Activated T-helper 1 cell treated with anti-CD3 and anti-CD28 coated beads, Interleukin-12 subunit alpha, Interleukin-12 subunit beta, Interleukin-2, Interleukin-4 antibody, amounts not matched to agents 30 ng/mL and 10 ng/mL and 1 ng/mL, durations not matched to agents 14 hours and 24 hours and 36 hours (primary cell): ENCODE measurements at regions of chr11 and their contacts with region 1.

Region 1: DNA sequence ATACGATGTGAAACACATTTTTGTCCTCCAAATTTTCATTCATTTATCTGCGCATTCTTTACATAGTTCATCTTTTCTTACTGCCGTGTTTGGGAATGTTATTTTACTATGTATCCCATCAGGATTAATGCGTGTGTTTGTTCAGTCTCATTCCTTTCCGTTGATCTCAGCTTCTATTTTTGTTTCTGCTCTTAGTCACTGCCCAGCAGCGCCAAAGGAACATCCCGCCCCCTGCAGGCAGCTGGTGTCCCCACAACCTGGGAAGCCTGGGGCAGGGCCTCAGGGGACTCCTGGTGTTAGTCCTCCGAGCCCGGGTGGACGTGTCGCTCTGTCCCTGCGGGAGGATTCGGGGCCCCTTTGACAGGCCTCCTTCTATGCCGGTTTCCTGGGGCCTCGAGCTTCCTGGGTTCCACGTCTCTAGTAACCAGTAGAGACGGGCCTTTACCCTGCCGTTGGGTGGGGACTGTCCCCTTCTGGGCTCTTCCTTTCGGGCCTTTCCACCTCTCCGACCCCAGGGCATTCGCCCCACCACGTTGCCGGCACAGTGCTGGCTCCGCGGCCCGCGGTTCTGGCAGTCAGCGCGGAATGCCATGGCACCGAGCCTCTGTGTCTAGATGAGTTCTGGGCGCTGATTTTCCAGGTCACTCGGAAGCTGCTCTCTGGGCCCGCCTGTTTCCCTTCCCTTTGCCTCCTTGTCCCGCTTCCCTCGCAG is 39.8 kb downstream of the WEE1 start:
- DNase-seq: peak; percentile 80
- H3K4me3 Mint-ChIP-seq: peak overlapping the region; percentile 89
- H3K27ac Mint-ChIP-seq: peak overlapping the region; percentile 99
- H3K4me1 Mint-ChIP-seq: peaks cover 44% of the 10 kb centered on the region
- H3K27me3 Mint-ChIP-seq: peaks cover 1% of the 10 kb centered on the region

Region 2: DNA sequence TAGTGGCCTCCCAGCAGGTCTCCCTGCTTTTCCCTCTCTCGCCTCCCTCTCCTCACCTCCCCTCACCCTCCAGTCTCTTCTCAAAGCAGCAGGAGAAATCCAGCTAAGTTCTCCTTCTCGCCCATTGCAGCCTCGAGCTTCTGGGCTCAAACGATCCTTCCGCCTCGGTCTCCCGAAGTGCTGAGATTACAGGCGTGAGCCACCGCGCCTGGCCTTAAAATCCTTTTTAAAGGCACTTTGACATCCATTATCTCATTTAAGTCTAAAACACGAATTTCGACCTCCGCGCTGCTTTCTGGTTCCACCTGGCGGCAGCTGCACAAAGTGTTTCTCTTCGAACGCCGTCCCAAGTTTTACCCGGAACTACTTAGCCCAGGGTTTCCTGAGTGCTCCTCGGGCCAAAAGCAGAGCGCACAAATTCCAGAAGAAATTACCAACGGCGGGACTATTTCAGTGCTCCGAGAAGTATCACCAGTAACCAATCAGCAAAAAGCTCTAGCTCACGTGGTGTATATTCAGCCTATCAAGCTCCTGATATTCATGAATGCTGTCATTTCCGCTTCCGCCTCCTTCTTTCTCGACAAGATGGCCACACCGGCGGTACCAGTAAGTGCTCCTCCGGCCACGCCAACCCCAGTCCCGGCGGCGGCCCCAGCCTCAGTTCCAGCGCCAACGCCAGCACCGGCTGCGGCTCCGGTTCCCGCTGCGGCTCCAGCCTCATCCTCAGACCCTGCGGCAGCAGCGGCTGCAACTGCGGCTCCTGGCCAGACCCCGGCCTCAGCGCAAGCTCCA is 1626.3 kb before region 1 on chr11 and contains the start of gene EIF3F:
- intact Hi-C with region 1: loop called (anchors 10 kb)
- DNase-seq: peak; percentile 91
- H3K4me3 Mint-ChIP-seq: peak within 1 kb of the TSS; percentile 99
- H3K27ac Mint-ChIP-seq: peak within 1 kb of the TSS; percentile 93
- H3K4me1 Mint-ChIP-seq: peaks cover 39% of the 10 kb centered on the region
- H3K27me3 Mint-ChIP-seq: peaks cover 2% of the 10 kb centered on the region
- total RNA-seq, gene EIF3F: 210 and 214 TPM in 2 replicates

Region 3: DNA sequence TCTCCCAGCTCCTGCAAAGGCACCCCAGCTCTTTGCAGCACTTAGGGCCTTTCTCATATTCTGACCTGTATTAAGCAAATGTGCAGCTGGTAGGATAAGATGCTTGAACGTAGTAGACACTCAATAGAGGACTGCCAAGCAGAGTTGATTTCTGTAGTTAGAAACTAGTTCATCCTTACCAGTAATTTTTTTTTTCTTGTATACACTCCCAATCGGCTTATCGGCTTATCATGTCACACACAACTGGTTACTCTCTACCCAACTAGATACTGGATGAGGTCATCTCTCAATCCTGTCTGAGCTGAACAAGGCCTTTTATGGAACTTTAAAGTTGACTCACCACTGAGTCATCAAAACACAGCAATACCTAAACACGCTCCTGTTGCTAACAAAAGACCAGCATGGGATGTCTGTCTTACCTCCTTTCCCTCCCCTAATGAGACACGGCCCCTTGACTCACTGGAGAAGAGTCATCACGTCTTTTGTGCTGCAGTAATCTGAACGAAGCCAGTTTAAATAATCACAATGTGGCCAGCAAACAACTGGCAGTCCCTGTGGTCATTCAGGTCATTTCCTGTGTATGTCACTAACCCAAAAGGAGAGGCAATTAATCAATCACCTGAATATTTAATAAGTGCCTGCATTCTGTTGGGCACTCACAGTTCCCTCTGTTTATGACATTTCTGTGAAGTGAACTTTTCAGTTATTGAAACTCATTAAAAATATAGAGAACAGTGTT is 47.3 kb before region 1 on chr11:
- intact Hi-C with region 1: loop called (anchors 1 kb)
- DNase-seq: peak; percentile 67
- H3K4me3 Mint-ChIP-seq: peak overlapping the region; percentile 13
- H3K27ac Mint-ChIP-seq: peak overlapping the region; percentile 82
- H3K4me1 Mint-ChIP-seq: peaks cover 37% of the 10 kb centered on the region
- H3K27me3 Mint-ChIP-seq: peaks cover 4% of the 10 kb centered on the region

Region 4: DNA sequence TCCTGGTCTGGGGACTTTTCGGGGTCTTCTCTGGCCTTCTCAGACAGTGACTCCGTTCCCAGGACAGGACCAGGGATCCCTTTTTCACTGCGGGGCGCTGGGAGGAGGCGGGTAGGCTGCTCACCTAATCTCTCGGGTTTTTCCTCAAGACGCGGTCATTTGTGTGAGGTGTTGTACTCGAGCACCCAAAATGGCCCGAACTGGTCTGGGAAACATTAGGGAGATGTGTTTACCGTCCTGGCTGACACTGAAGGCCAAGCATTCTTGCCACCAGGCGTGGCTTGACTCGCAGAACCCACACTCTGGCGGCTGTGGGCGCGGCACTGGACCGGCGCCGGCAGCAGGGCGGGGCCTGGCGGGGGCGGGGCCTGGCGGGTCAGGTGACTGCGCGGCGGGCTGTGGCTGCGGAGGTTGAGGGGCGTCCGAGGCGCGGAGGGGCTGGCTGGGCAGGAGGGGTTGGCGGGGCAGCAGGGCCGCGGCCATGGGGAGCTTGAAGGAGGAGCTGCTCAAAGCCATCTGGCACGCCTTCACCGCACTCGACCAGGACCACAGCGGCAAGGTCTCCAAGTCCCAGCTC is 50.5 kb after region 1 on chr11 and contains the start of gene SWAP70:
- intact Hi-C with region 1: loop called (anchors 1 kb)
- DNase-seq: peak; percentile 79
- H3K4me3 Mint-ChIP-seq: peak within 1 kb of the TSS; percentile 88
- H3K27ac Mint-ChIP-seq: peak within 1 kb of the TSS; percentile 31
- H3K4me1 Mint-ChIP-seq: peaks cover 18% of the 10 kb centered on the region
- H3K27me3 Mint-ChIP-seq: peaks cover 27% of the 10 kb centered on the region
- total RNA-seq, gene SWAP70: 6.3 and 8.5 TPM in 2 replicates

Region 5: GRCh38 chr11:9774591-9775397 is 161.5 kb after region 1 on chr11:
- intact Hi-C with region 1: no loop called
- DNase-seq: no peak
- H3K4me3 Mint-ChIP-seq: no peak overlapping the region
- H3K27ac Mint-ChIP-seq: no peak overlapping the region
- H3K4me1 Mint-ChIP-seq: no peaks in the 10 kb centered on the region
- H3K27me3 Mint-ChIP-seq: no peaks in the 10 kb centered on the region

Region 6: GRCh38 chr11:9861860-9862725 is 248.8 kb after region 1 on chr11:
- intact Hi-C with region 1: loop called (anchors 10 kb)
- DNase-seq: peak; percentile 11
- H3K4me3 Mint-ChIP-seq: no peak overlapping the region
- H3K27ac Mint-ChIP-seq: peak overlapping the region; percentile 1
- H3K4me1 Mint-ChIP-seq: peaks cover 34% of the 10 kb centered on the region
- H3K27me3 Mint-ChIP-seq: peaks cover 4% of the 10 kb centered on the region

Region 7: GRCh38 chr11:10540923-10541560 is 927.8 kb after region 1 on chr11 and contains the start of gene RNF141:
- intact Hi-C with region 1: loop called (anchors 5 kb)
- DNase-seq: peak; percentile 92
- H3K4me3 Mint-ChIP-seq: peak within 1 kb of the TSS; percentile 90
- H3K27ac Mint-ChIP-seq: peak within 1 kb of the TSS; percentile 73
- H3K4me1 Mint-ChIP-seq: peaks cover 29% of the 10 kb centered on the region
- H3K27me3 Mint-ChIP-seq: peaks cover 5% of the 10 kb centered on the region
- total RNA-seq, gene RNF141: 12.4 and 13.2 TPM in 2 replicates

Region 8: DNA sequence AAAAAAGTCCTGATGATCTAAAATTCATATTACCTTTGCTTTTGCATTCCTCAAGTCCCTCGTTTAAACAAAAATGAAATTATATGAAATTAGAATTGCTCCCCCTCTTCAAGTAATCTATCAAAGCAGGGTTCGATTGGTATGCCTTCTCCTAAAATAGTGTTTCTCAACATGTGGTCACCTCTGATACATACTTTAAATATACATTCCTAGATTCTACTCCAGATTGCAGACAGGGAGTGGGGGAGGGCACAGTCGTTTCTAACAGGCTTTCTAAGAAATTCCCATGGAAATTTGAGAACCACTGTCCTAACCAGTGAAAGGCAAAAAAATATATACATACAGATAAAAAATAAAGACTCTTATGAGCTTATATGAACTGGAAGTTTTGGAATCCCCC is 1102.9 kb after region 1 on chr11:
- intact Hi-C with region 1: no loop called
- DNase-seq: no peak
- H3K4me3 Mint-ChIP-seq: no peak overlapping the region
- H3K27ac Mint-ChIP-seq: no peak overlapping the region
- H3K4me1 Mint-ChIP-seq: no peaks in the 10 kb centered on the region
- H3K27me3 Mint-ChIP-seq: peaks cover 20% of the 10 kb centered on the region